Ovary (tissue), 10 donors: ENCODE measurements at regions of chr4 and their contacts with region 1.

Region 1: GRCh38 chr4:71360844-71361243 is 22.0 kb downstream of the SLC4A4 start:
- DNase-seq: no peak
- H3K4me3 ChIP-seq: no peak overlapping the region
- H3K27ac ChIP-seq: no peak overlapping the region
- H3K4me1 ChIP-seq: no peaks in the 10 kb centered on the region
- H3K27me3 ChIP-seq: no peaks in the 10 kb centered on the region
- CTCF ChIP-seq: no peak
- EP300 ChIP-seq: no peak
- POLR2A ChIP-seq: no peak

Region 2: GRCh38 chr4:71020611-71021010 is 340.2 kb before region 1 on chr4:
- intact Hi-C with region 1: no loop called
- DNase-seq: no peak
- H3K4me3 ChIP-seq: no peak overlapping the region
- H3K27ac ChIP-seq: no peak overlapping the region
- H3K4me1 ChIP-seq: no peaks in the 10 kb centered on the region
- H3K27me3 ChIP-seq: no peaks in the 10 kb centered on the region
- CTCF ChIP-seq: no peak
- EP300 ChIP-seq: no peak
- POLR2A ChIP-seq: no peak

Region 3: DNA sequence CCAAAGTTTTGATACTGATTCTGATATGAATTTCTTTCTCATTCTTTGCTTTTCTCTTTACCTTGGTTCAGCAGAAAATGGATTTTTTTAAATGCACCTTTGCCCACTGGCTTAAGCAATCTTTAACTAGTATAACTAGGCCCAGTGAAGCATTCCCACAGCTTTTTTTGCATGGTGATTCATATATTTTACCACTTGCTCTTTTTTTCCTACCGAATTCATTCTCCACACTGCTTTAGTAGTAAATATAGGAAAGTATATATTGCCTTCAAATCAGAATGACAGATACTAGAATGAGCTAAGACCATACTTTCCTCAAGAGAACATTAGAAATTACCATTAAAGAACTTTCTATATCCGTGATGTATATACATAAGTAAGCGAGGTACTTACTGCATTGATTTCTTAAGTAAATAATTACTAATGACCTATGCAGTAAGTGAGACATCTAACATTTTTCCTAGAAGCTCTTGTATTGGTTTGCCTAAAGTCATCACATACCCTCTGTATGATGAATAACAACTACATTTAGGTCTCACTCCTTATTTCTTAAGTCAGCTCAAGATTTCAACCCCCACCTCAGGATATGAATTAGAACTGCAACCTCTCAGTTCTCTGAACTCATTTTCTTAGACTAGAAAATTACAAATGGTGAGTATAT is 22.2 kb after region 1 on chr4:
- intact Hi-C with region 1: loop called in 1 of 4 experiments (anchors 2 kb)
- DNase-seq: no peak
- H3K4me3 ChIP-seq: no peak overlapping the region
- H3K27ac ChIP-seq: no peak overlapping the region
- H3K4me1 ChIP-seq: no peaks in the 10 kb centered on the region
- H3K27me3 ChIP-seq: no peaks in the 10 kb centered on the region
- CTCF ChIP-seq: no peak
- EP300 ChIP-seq: no peak
- POLR2A ChIP-seq: no peak